ENCODE measurements at regions of chr7 and their contacts with region 1.

Region 1: GRCh38 chr7:85851571-85852193 is 664.8 kb upstream of the SEMA3D start:
- DNase-seq: no peak
- ATAC-seq: no peak
- H3K4me3 ChIP-seq: no peak overlapping the region
- H3K27ac ChIP-seq: no peak overlapping the region
- H3K4me1 ChIP-seq: no peaks in the 10 kb centered on the region
- H3K27me3 ChIP-seq: no peaks in the 10 kb centered on the region
- CTCF ChIP-seq: peak; percentile 24

Region 2: GRCh38 chr7:85030893-85031292 is 820.8 kb before region 1 on chr7:
- intact Hi-C with region 1: loop called in 1 of 2 experiments (anchors 5 kb)
- DNase-seq: no peak
- ATAC-seq: no peak
- H3K4me3 ChIP-seq: no peak overlapping the region
- H3K27ac ChIP-seq: no peak overlapping the region
- H3K4me1 ChIP-seq: no peaks in the 10 kb centered on the region
- H3K27me3 ChIP-seq: no peaks in the 10 kb centered on the region
- CTCF ChIP-seq: peak; percentile 32

Region 3: DNA sequence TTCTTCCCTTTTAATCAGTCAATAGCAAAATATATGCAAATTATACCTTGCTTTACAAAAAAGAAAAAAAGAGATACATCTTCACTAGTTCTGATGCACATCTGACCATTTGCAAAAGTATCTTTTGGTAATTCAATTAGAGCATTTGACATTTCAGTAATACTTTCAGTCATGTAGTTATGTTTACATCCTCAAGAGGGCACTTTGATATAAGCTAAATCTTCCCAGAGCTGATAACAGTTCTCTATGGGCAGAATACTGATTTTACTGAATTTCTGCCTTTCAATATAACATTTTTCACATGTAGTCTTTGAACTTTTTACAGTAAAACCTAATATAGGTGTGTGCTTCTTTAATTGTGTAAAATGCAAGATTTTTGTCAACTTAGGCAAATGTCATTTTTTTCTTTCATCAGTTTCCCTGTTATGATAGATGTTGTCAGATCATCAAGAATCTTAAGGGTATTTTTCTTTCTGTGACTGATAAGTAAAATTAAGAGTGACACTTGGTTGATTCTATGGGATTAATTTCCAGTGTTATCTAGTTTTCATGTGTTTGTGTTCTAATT is 38.6 kb after region 1 on chr7:
- intact Hi-C with region 1: no loop called
- DNase-seq: no peak
- ATAC-seq: no peak
- H3K4me3 ChIP-seq: no peak overlapping the region
- H3K27ac ChIP-seq: no peak overlapping the region
- H3K4me1 ChIP-seq: no peaks in the 10 kb centered on the region
- H3K27me3 ChIP-seq: no peaks in the 10 kb centered on the region
- CTCF ChIP-seq: peak; percentile 30

Measured in psoas muscle (tissue), 8 donors.